ENCODE measurements at regions of chr17 and their contacts with region 1.

Region 1: GRCh38 chr17:72592242-72592966 is 471.6 kb downstream of the SOX9 start:
- DNase-seq: no peak
- H3K4me3 ChIP-seq: peak overlapping the region; percentile 83
- H3K27me3 ChIP-seq: no peaks in the 10 kb centered on the region
- CTCF ChIP-seq: no peak

Region 2: GRCh38 chr17:72488551-72489244 is 103.7 kb before region 1 on chr17:
- CTCF ChIA-PET with region 1: no interaction called
- POLR2A ChIA-PET with region 1: no interaction called
- DNase-seq: no peak
- H3K4me3 ChIP-seq: no peak overlapping the region
- H3K27me3 ChIP-seq: no peaks in the 10 kb centered on the region
- CTCF ChIP-seq: no peak

Region 3: GRCh38 chr17:72602517-72603419 is 10.4 kb after region 1 on chr17:
- CTCF ChIA-PET with region 1: interaction called, 15 read pairs
- POLR2A ChIA-PET with region 1: no interaction called
- DNase-seq: no peak
- H3K4me3 ChIP-seq: no peak overlapping the region
- H3K27me3 ChIP-seq: no peaks in the 10 kb centered on the region
- CTCF ChIP-seq: peak; percentile 46